SK-N-SH (cell line): ENCODE measurements at regions of chr3 and their contacts with region 1.

Region 1: GRCh38 chr3:132641837-132642538 is 17.6 kb downstream of the ACAD11 start:
- DNase-seq: peak; percentile 70
- H3K4me3 ChIP-seq: no peak overlapping the region
- H3K27ac ChIP-seq: no peak overlapping the region
- H3K4me1 ChIP-seq: peaks cover 0 to 14% of the 10 kb centered on the region in 2 experiments; a peak in 3 of 4 replicates
- H3K27me3 ChIP-seq: no peaks in the 10 kb centered on the region
- CTCF ChIP-seq: peak; percentile 81
- EP300 ChIP-seq: no peak
- RAD21 ChIP-seq: peak; percentile 86

Region 2: GRCh38 chr3:132241776-132242514 is 400.0 kb before region 1 on chr3:
- CTCF ChIA-PET with region 1: no interaction called
- POLR2A ChIA-PET with region 1: no interaction called
- DNase-seq: no peak
- H3K4me3 ChIP-seq: no peak overlapping the region
- H3K27ac ChIP-seq: no peak overlapping the region
- H3K4me1 ChIP-seq: no peaks in the 10 kb centered on the region
- H3K27me3 ChIP-seq: no peaks in the 10 kb centered on the region; the same call in 1 of the 2 replicates
- CTCF ChIP-seq: no peak
- EP300 ChIP-seq: no peak
- RAD21 ChIP-seq: no peak

Region 3: GRCh38 chr3:132543036-132543739 is 98.8 kb before region 1 on chr3:
- CTCF ChIA-PET with region 1: interaction called, 121 read pairs
- POLR2A ChIA-PET with region 1: no interaction called
- DNase-seq: no peak
- H3K4me3 ChIP-seq: no peak overlapping the region
- H3K27ac ChIP-seq: peak overlapping the region; percentile 87 to 99
- H3K4me1 ChIP-seq: peaks cover 2 to 16% of the 10 kb centered on the region in 2 experiments; a peak in 3 of 4 replicates
- H3K27me3 ChIP-seq: no peaks in the 10 kb centered on the region
- CTCF ChIP-seq: no peak
- EP300 ChIP-seq: peak in 1 of 2 experiments; percentile 78; a peak in 2 of 4 replicates
- RAD21 ChIP-seq: no peak

Region 4: DNA sequence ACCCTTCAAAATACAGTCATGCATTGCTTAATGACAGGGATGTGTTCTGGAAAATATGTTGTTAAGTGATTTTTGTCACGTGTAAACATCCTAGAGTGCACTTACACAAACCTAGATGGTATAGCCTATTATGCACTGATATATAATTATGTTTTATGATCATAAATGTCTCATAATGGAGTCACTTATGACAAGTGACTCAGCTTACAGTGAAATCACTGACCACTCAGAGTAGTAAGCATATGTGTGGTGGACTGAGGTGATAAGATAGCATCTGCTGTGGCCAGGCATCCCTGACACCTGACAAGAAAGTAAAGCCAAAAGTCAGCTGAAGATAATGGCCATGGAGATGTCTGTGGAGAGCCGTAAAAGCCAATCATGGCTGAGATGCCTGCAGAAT is 12.2 kb after region 1 on chr3:
- CTCF ChIA-PET with region 1: interaction called, 10 read pairs
- POLR2A ChIA-PET with region 1: no interaction called
- DNase-seq: no peak
- H3K4me3 ChIP-seq: no peak overlapping the region
- H3K27ac ChIP-seq: no peak overlapping the region; a peak in 1 of 4 replicates
- H3K4me1 ChIP-seq: peaks cover 8 to 15% of the 10 kb centered on the region in 2 experiments; a peak in 3 of 4 replicates
- H3K27me3 ChIP-seq: no peaks in the 10 kb centered on the region
- CTCF ChIP-seq: no peak
- EP300 ChIP-seq: no peak
- RAD21 ChIP-seq: no peak

Region 5: GRCh38 chr3:133368371-133369067 is 726.5 kb after region 1 on chr3:
- CTCF ChIA-PET with region 1: no interaction called
- POLR2A ChIA-PET with region 1: no interaction called
- DNase-seq: no peak
- H3K4me3 ChIP-seq: no peak overlapping the region
- H3K27ac ChIP-seq: no peak overlapping the region
- H3K4me1 ChIP-seq: peaks cover 0 to 8% of the 10 kb centered on the region in 2 experiments; a peak in 1 of 4 replicates
- H3K27me3 ChIP-seq: no peaks in the 10 kb centered on the region
- CTCF ChIP-seq: no peak
- EP300 ChIP-seq: no peak
- RAD21 ChIP-seq: no peak